ENCODE measurements at regions of chr2 and their contacts with region 1.

Region 1: GRCh38 chr2:30711646-30712085 is 95.6 kb downstream of the CAPN13 start:
- DNase-seq: peak; percentile 86 to 89
- ATAC-seq: peak; percentile 80

Region 2: GRCh38 chr2:30164131-30164925 is 547.3 kb before region 1 on chr2:
- intact Hi-C with region 1: loop called in 1 of 2 experiments (anchors 5 kb)
- DNase-seq: no peak
- ATAC-seq: no peak

Region 3: DNA sequence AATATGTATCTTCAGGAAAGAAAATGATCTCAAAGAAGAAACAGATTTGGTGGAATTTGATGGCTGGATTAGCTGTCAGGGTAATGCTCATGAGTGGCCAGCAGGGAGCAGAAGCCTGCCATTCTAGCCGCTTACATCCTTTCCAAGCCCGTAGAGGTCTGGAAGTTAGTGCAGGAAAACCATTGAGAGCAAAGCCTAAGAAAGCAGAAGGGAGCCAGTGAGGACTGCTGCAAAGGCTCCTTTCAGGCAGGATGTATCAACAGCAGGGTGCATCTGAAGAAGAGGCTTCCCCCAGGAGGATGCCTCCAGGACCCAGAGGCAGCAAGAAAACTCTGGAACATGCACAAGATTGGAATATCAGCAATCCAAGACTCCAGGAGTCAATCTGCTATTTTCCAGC is 503.2 kb before region 1 on chr2:
- intact Hi-C with region 1: loop called in 1 of 2 experiments (anchors 5 kb)
- DNase-seq: peak; percentile 46 to 58
- ATAC-seq: peak; percentile 97

Region 4: GRCh38 chr2:30899516-30900054 is 187.9 kb after region 1 on chr2:
- intact Hi-C with region 1: no loop called
- DNase-seq: no peak
- ATAC-seq: no peak

Region 5: GRCh38 chr2:31163011-31163539 is 451.4 kb after region 1 on chr2:
- intact Hi-C with region 1: loop called in 1 of 2 experiments (anchors 5 kb)
- DNase-seq: no peak
- ATAC-seq: no peak

Region 6: DNA sequence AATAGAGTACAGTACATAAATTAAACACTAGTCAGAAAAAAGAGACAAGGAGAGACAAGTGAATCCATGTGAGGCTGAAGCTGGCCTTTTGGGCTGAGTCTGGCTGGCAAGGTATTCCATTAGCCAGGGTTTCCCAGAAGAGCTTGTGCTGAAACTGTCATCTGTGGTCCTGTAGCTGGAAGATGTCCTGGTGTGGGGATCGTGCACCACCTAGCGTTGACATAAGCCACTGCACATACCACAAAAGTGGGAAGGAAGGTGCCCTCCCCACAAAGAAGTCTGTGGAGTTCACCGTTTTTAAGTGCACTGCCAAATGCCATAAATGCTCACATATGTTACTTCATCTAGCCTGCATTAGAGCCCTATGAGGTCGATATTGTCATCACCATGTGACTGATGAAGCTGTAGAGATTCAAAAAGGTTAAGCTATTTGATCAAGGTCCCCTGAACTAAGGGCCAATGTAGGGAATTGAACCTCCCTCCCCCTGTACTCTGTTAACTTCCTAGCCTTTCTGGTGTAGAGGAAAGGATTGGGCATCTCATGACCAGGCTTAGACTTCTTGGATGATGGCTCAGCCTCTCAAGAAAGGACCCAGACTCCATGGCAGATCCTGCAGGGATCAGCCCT is 458.5 kb after region 1 on chr2:
- intact Hi-C with region 1: loop called in 1 of 2 experiments (anchors 5 kb)
- DNase-seq: peak; percentile 36 to 40
- ATAC-seq: peak; percentile 86

Region 7: GRCh38 chr2:31333527-31334183 is 622.0 kb after region 1 on chr2:
- intact Hi-C with region 1: loop called (anchors 2 to 10 kb)
- DNase-seq: peak; percentile 54 to 84
- ATAC-seq: peak; percentile 87